ENCODE measurements at regions of chr7 and their contacts with region 1.

Region 1: DNA sequence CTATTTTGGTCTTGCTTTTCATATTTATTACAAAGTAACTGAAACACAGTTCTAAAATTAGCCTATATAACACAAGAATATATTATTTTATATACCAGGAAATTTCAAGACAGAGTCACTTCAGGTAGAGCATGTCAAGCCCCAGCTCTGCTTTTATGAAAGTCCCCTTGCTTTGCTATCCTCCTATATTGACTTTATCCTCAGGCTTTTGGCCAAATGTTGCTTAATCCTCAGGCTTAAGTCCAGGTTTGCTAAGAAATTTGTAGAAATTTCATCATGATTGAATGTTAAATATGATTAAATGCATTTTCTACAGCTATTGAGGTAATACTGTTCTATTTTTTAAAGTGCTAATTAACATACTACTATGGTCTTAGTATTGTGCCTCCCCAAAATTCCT is 227.6 kb downstream of the FZD1 start:
- DNase-seq: no peak
- H3K4me3 ChIP-seq: no peak overlapping the region
- H3K27ac ChIP-seq: no peak overlapping the region
- H3K4me1 ChIP-seq: no peaks in the 10 kb centered on the region
- H3K27me3 ChIP-seq: no peaks in the 10 kb centered on the region
- CTCF ChIP-seq: no peak
- POLR2A ChIP-seq: no peak

Region 2: GRCh38 chr7:91717681-91718470 is 226.0 kb after region 1 on chr7:
- CTCF ChIA-PET with region 1: no interaction called
- POLR2A ChIA-PET with region 1: no interaction called
- dilution Hi-C with region 1: no loop called
- intact Hi-C with region 1: loop called (anchors 5 kb)
- DNase-seq: no peak
- H3K4me3 ChIP-seq: no peak overlapping the region
- H3K27ac ChIP-seq: no peak overlapping the region
- H3K4me1 ChIP-seq: no peaks in the 10 kb centered on the region
- H3K27me3 ChIP-seq: no peaks in the 10 kb centered on the region
- CTCF ChIP-seq: no peak
- POLR2A ChIP-seq: no peak